ENCODE measurements at regions of chr5 and their contacts with region 1.

Region 1: DNA sequence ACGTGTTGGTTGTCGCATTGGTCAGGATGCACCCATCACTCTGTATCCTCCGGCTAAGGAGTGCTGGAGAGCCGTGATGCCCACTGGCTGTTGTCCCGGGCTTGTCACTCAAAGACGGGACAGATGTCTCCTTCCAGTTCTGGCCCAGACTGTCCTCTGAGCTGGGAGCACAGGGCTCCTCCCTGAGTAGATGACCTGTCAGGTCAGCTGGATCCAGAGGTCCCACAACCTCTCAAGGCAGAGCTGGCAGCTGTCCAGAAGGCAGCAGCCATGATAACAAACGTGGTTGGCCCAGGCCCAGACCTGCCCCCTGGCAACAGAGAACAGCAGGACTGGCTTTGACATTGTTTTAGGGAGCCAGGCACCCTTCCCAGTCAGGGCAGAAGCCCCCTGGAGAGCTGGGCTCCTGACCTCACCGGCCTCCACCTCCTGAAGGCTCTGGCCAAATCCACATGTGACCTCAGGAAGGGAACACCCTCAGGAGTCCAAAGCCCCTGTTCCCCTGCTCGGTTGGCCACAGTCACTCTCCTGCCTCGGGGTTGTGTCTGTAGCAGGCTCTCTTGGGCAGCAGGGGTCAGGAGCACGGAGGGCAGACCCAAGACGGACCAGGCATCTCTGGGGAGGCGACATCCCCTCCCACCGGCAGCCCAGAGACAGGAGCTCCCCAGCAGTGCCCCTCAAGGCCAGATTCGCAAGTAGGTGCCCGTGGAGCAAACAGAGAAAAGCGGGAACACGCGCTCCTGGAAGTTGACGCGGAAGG is 10.3 kb downstream of the TRIM7 start:
- DNase-seq: no peak
- H3K4me3 ChIP-seq: no peak overlapping the region
- H3K27me3 ChIP-seq: no peaks in the 10 kb centered on the region
- CTCF ChIP-seq: no peak

Region 2: GRCh38 chr5:181151146-181151545 is 43.5 kb before region 1 on chr5:
- CTCF ChIA-PET with region 1: no interaction called
- POLR2A ChIA-PET with region 1: no interaction called
- DNase-seq: no peak
- H3K4me3 ChIP-seq: no peak overlapping the region
- H3K27me3 ChIP-seq: peaks cover 1% of the 10 kb centered on the region
- CTCF ChIP-seq: no peak

Region 3: DNA sequence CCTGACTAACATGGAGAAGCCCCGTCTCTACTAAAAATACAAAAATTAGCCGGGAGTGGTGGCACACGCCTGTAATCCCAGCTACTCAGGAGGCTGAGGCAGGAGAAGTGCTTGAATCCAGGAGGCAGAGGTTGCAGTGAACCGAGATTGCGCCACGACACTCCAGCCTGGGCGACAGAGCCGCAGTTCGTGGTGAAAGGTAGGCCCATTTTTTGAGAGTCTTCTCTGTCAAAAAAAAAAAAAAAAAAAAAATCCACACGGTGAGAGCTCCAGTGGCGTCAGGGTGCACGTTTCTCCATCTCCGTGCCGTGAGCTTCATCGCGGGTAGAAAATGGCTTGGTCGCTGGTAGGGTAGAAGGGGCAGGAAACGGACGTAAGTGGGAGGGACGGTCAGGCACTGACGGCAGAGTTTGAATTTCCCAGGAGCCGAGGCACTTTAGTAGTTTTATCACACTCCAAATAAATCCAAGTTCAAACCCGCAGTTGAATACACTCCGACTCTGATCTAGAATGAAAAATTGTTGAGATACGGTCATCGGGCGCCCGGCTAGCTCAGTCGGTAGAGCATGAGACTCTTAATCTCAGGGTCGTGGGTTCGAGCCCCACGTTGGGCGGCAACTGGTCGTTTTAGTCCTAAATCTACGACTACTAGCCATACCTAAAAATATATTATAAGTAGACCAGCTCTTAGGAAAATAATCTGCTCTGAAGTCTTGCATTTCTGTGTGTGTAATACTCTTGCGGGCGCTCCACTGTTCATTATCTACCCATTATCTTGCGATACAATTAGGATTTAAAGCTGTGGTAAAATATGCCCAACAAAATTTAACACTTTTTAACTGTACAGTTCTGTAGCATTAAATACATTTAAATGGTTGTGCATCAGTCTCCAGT is 12.8 kb after region 1 on chr5:
- CTCF ChIA-PET with region 1: interaction called, 12 read pairs
- POLR2A ChIA-PET with region 1: interaction called, 3 read pairs
- DNase-seq: peak; percentile 74
- H3K4me3 ChIP-seq: peak overlapping the region; percentile 55
- H3K27me3 ChIP-seq: no peaks in the 10 kb centered on the region
- CTCF ChIP-seq: no peak